PC-3 (cell line): ENCODE measurements at regions of chr3 and their contacts with region 1.

Region 1: GRCh38 chr3:155664925-155665695 is 79.8 kb downstream of the PLCH1 start:
- DNase-seq: peak; percentile 88
- ATAC-seq: peak; percentile 90
- H3K4me3 ChIP-seq: peak overlapping the region; percentile 20; the same call in 1 of the 2 replicates
- H3K27ac ChIP-seq: peak overlapping the region; percentile 0; the same call in 1 of the 2 replicates
- H3K4me1 ChIP-seq: peaks cover 27% of the 10 kb centered on the region
- H3K27me3 ChIP-seq: no peaks in the 10 kb centered on the region
- CTCF ChIP-seq: no peak

Region 2: GRCh38 chr3:155604126-155604525 is 61.0 kb before region 1 on chr3:
- CTCF ChIA-PET with region 1: no interaction called
- POLR2A ChIA-PET with region 1: no interaction called
- intact Hi-C with region 1: loop called (anchors 1 kb)
- DNase-seq: peak; percentile 66
- ATAC-seq: peak; percentile 88
- H3K4me3 ChIP-seq: no peak overlapping the region
- H3K27ac ChIP-seq: no peak overlapping the region
- H3K4me1 ChIP-seq: peaks cover 26% of the 10 kb centered on the region
- H3K27me3 ChIP-seq: no peaks in the 10 kb centered on the region
- CTCF ChIP-seq: no peak

Region 3: GRCh38 chr3:155676252-155676981 is 11.3 kb after region 1 on chr3:
- CTCF ChIA-PET with region 1: no interaction called
- POLR2A ChIA-PET with region 1: no interaction called
- intact Hi-C with region 1: no loop called
- DNase-seq: peak; percentile 58
- ATAC-seq: peak; percentile 89
- H3K4me3 ChIP-seq: peak overlapping the region; percentile 57
- H3K27ac ChIP-seq: no peak overlapping the region
- H3K4me1 ChIP-seq: 0 out of 2 replicates have a peak, but pooled peaks cover 6% of the 10 kb centered on the region
- H3K27me3 ChIP-seq: no peaks in the 10 kb centered on the region
- CTCF ChIP-seq: no peak